Activated naive CD8-positive, alpha-beta T cell treated with anti-CD3 and anti-CD28 coated beads, Interleukin-2, amount 10 ng/mL, durations not matched to agents 7 days and 5 days (primary cell): ENCODE measurements at regions of chr3 and their contacts with region 1.

Region 1: GRCh38 chr3:43286115-43286840 is at the start of gene SNRK:
- DNase-seq: peak; percentile 99
- ATAC-seq: peak; percentile 82
- H3K4me3 Mint-ChIP-seq: peak within 1 kb of the TSS; percentile 95
- H3K27ac Mint-ChIP-seq: peak within 1 kb of the TSS; percentile 95
- H3K4me1 Mint-ChIP-seq: peaks cover 26% of the 10 kb centered on the region
- H3K27me3 Mint-ChIP-seq: no peaks in the 10 kb centered on the region
- total RNA-seq, gene SNRK: 70.7 to 73.6 TPM

Region 2: DNA sequence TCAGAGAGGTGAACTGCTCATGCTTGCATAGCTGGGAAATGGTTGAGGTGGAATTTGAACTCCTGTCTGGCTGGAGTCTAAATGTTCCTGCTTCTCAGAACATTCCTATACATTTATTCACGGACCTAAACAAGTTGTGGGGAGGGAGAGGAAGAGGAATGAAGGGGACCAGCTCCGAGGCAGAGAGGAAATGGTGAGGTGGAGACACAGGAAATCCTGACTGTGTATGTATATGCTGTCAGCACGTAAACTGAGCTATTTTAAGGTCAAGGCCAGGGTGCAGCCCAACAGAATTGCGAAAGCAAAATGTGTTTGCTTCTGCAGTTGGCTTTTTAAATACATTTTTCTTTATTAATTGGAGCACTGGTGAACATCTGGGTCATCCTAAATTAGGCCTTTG is 106.3 kb before region 1 on chr3:
- POLR2A ChIA-PET with region 1: interaction called, 14 read pairs
- DNase-seq: no peak
- ATAC-seq: peak; percentile 90
- H3K4me3 Mint-ChIP-seq: peak overlapping the region; percentile 84
- H3K27ac Mint-ChIP-seq: peak overlapping the region; percentile 98
- H3K4me1 Mint-ChIP-seq: peaks cover 38% of the 10 kb centered on the region
- H3K27me3 Mint-ChIP-seq: peaks cover 1% of the 10 kb centered on the region

Region 3: DNA sequence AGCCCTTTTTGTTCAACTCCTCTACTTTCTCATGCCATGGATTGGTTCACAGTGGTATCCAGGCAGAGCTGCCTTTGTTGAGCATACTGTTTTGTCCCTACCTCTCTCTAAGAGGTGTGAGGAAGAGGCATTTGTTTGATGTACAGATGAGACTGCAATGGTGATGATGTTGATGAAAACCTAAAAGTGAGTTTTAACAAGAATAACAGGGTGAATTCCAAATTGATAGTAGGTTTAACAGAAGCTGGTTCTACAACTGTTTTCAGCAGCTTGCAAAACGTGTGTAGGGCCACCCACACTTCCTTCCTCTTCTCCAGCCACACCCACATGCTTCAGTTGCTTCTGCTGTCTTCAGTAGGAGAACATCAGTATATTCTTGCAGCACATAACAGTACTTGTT is 10.3 kb after region 1 on chr3:
- POLR2A ChIA-PET with region 1: interaction called, 32 read pairs
- DNase-seq: no peak
- ATAC-seq: peak; percentile 89
- H3K4me3 Mint-ChIP-seq: peak overlapping the region; percentile 85
- H3K27ac Mint-ChIP-seq: peak overlapping the region; percentile 85
- H3K4me1 Mint-ChIP-seq: peaks cover 61% of the 10 kb centered on the region
- H3K27me3 Mint-ChIP-seq: no peaks in the 10 kb centered on the region

Region 4: DNA sequence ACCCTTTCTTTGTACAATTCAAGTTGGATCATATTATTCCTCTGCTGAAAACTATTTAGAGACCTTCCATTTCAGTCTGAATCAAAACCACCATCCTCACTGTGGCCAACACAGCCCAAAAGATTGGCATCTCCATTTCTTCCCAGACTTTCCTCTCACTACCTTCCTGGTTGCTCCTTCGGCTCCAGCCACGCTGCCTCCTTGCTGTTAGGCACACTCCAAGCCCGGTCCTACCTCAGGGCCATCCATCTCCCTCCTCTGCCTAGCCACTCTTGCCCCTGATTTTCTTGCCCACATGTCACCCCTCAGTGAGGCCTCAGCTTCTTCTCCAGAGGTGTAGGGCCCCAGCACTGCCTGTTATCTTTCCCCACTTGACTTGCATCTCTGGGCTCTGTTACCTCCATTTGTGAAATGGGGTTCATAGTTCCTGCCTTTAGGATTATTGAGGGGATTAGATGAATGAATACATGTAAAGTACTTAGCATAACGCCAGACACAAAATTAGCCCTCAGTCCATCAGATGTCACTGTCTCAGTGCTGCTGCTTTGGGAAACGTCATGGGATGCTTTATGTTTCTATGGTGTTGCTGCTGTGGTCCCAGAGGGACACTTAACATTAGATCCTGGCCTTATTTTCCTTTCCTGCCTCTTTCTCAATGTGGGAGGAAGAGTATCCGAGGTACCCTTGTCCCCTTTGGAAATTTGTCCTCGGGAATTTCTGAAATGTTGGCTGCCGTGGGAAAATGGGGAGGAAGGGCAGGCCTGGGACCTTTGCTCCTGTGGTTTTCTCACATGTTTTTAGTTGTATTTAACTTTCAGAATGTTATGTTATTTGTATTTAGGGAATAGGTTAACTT is 31.4 kb after region 1 on chr3:
- POLR2A ChIA-PET with region 1: no interaction called
- DNase-seq: no peak
- ATAC-seq: no peak
- H3K4me3 Mint-ChIP-seq: no peak overlapping the region
- H3K27ac Mint-ChIP-seq: peak overlapping the region; percentile 31
- H3K4me1 Mint-ChIP-seq: peaks cover 33% of the 10 kb centered on the region
- H3K27me3 Mint-ChIP-seq: no peaks in the 10 kb centered on the region

Region 5: GRCh38 chr3:43345877-43346276 is 59.6 kb after region 1 on chr3:
- POLR2A ChIA-PET with region 1: interaction called, 46 read pairs
- DNase-seq: no peak
- ATAC-seq: peak; percentile 51
- H3K4me3 Mint-ChIP-seq: peak overlapping the region; percentile 74
- H3K27ac Mint-ChIP-seq: peak overlapping the region; percentile 89
- H3K4me1 Mint-ChIP-seq: peaks cover 64% of the 10 kb centered on the region
- H3K27me3 Mint-ChIP-seq: no peaks in the 10 kb centered on the region